Activated CD4-positive, alpha-beta T cell treated with anti-CD3 and anti-CD28 coated beads, Interleukin-2, amount 10 ng/mL, durations not matched to agents 24 days and 14 days (primary cell): ENCODE measurements at regions of chr2 and their contacts with region 1.

Region 1: DNA sequence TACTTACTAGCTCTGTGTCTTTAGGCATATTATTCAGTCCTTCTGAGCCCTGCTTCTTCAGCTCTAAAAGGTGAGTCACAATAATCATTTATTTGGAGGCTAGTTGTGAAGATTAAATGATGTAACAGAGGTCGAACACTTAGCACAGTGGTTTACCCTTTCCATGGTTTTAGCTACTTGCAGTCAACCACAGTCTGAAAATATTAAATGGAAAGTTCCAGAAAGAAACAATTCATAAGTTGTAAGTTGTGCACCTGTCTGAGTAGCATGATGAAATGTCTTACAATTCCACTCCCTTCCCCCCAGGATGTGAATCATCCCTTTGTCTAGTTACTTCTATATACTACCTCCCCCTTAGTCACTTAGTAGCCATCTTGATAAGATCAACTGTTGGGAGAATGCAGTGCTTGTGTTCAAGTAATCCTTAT is 217.6 kb upstream of the THUMPD2 start:
- DNase-seq: no peak
- H3K4me3 Mint-ChIP-seq: no peak overlapping the region
- H3K27ac Mint-ChIP-seq: peak overlapping the region; percentile 79
- H3K4me1 Mint-ChIP-seq: peaks cover 21% of the 10 kb centered on the region
- H3K27me3 Mint-ChIP-seq: no peaks in the 10 kb centered on the region

Region 2: DNA sequence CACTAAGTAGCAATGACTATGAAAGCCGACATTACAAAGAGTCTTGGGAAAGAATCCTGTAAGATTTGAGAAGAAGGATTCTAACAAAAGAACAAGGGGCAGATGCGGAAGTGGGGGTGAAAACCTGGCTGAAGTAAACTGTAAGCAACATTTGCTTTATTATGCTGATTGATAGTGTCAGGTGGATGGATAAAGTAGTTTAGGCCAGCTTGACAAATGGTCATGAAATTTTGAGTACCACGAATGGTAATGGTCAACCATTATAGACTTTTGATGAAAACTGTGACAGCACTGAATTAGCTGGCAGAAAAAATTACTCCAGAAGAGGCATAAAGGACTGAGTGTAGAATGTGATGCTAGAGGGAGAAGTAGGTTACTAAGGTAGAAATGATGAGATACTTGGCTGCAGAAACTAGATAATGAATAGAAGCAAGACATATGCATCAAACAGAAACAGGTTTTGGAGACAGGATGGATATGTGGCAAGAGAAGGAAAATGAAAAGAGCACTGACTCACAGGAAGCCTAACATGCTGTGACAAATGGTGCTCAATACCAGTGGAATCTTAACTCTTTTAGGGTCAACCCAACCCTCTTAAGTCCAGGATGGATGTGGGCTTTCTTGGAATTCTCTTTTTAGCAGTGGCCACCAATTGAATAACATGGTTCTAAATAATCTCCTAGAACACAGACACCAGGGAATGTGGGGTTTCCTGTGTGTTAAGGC is 224.4 kb before region 1 on chr2:
- intact Hi-C with region 1: loop called (anchors 5 kb)
- DNase-seq: no peak
- H3K4me3 Mint-ChIP-seq: no peak overlapping the region
- H3K27ac Mint-ChIP-seq: peak overlapping the region; percentile 12
- H3K4me1 Mint-ChIP-seq: peaks cover 30% of the 10 kb centered on the region
- H3K27me3 Mint-ChIP-seq: no peaks in the 10 kb centered on the region

Region 3: DNA sequence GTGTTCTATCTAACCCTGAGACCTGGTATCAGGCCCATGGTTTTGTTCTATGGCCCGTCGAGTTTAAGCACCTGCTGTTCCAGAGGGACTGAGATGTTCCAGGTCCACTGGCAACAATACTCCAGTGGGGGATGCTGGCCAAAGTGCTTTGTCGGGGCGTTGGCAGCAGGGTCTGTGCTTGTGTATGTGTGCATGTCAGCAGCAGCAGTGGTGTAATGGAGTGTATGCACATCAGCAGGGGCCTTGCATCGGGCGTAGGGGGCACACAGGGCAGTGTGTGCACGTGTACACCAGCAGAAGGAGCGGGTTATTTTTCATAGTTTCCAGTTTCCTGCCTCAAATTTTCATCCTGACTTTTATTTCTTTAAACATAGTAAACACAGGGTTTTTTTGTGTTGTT is 179.8 kb before region 1 on chr2:
- intact Hi-C with region 1: no loop called
- DNase-seq: no peak
- H3K4me3 Mint-ChIP-seq: no peak overlapping the region
- H3K27ac Mint-ChIP-seq: no peak overlapping the region
- H3K4me1 Mint-ChIP-seq: no peaks in the 10 kb centered on the region
- H3K27me3 Mint-ChIP-seq: no peaks in the 10 kb centered on the region

Region 4: GRCh38 chr2:39948016-39948719 is 48.5 kb before region 1 on chr2:
- intact Hi-C with region 1: loop called (anchors 1 kb)
- DNase-seq: no peak
- H3K4me3 Mint-ChIP-seq: peak overlapping the region; percentile 32
- H3K27ac Mint-ChIP-seq: peak overlapping the region; percentile 92
- H3K4me1 Mint-ChIP-seq: peaks cover 35% of the 10 kb centered on the region
- H3K27me3 Mint-ChIP-seq: no peaks in the 10 kb centered on the region

Region 5: GRCh38 chr2:40032650-40033319 is 36.1 kb after region 1 on chr2:
- intact Hi-C with region 1: loop called (anchors 1 kb)
- DNase-seq: no peak
- H3K4me3 Mint-ChIP-seq: no peak overlapping the region
- H3K27ac Mint-ChIP-seq: peak overlapping the region; percentile 64
- H3K4me1 Mint-ChIP-seq: peaks cover 17% of the 10 kb centered on the region
- H3K27me3 Mint-ChIP-seq: no peaks in the 10 kb centered on the region

Region 6: GRCh38 chr2:40210344-40210967 is 213.8 kb after region 1 on chr2:
- intact Hi-C with region 1: loop called (anchors 2 kb)
- DNase-seq: no peak
- H3K4me3 Mint-ChIP-seq: no peak overlapping the region
- H3K27ac Mint-ChIP-seq: peak overlapping the region; percentile 48
- H3K4me1 Mint-ChIP-seq: peaks cover 20% of the 10 kb centered on the region
- H3K27me3 Mint-ChIP-seq: no peaks in the 10 kb centered on the region

Region 7: GRCh38 chr2:40639320-40639719 is 642.7 kb after region 1 on chr2:
- intact Hi-C with region 1: no loop called
- DNase-seq: no peak
- H3K4me3 Mint-ChIP-seq: no peak overlapping the region
- H3K27ac Mint-ChIP-seq: no peak overlapping the region
- H3K4me1 Mint-ChIP-seq: no peaks in the 10 kb centered on the region
- H3K27me3 Mint-ChIP-seq: no peaks in the 10 kb centered on the region